PC-9 (cell line): ENCODE measurements at regions of chr3 and their contacts with region 1.

Region 1: DNA sequence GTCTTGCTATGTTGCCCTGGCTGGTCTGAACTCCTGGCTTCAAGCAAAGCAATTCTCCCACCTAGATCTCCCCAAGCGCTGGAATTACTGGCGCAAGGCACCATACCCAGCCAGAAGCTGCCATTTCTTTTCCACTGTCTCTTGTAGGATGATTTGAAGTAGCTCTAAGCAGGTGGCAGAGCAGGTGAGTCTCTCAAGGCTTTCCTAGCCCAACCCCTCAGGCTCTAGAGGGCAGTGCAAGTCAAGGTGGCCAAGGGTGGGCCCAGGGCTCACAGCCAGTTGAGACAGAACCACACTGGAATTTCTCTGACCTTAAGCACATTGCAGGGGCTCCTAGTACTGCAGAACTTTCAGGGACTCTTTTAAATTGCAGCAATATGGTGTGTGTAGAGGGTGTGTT is 15.6 kb upstream of the DAG1 start:
- DNase-seq: peak; percentile 75
- H3K4me3 ChIP-seq: no peak overlapping the region
- H3K27ac ChIP-seq: no peak overlapping the region
- H3K4me1 ChIP-seq: peaks cover 24% of the 10 kb centered on the region
- H3K27me3 ChIP-seq: no peaks in the 10 kb centered on the region
- CTCF ChIP-seq: peak; percentile 51; the same call in 1 of the 2 replicates

Region 2: GRCh38 chr3:48989796-48990635 is 464.4 kb before region 1 on chr3 and contains the start of gene P4HTM:
- CTCF ChIA-PET with region 1: interaction called, 7 read pairs
- POLR2A ChIA-PET with region 1: no interaction called
- intact Hi-C with region 1: loop called (anchors 2 kb)
- DNase-seq: peak; percentile 64 to 82
- H3K4me3 ChIP-seq: peak within 1 kb of the TSS; percentile 78
- H3K27ac ChIP-seq: peak within 1 kb of the TSS; percentile 48; the same call in 1 of the 2 replicates
- H3K4me1 ChIP-seq: peaks cover 18% of the 10 kb centered on the region
- H3K27me3 ChIP-seq: no peaks in the 10 kb centered on the region
- CTCF ChIP-seq: no peak; the same call in 1 of the 2 replicates
- total RNA-seq, gene P4HTM: 49.1 and 57.1 TPM in 2 replicates

Region 3: GRCh38 chr3:49339945-49340800 is 114.3 kb before region 1 on chr3 and contains the start of gene USP4:
- CTCF ChIA-PET with region 1: interaction called, 8 read pairs
- POLR2A ChIA-PET with region 1: interaction called, 10 read pairs
- intact Hi-C with region 1: loop called (anchors 1 kb)
- DNase-seq: peak; percentile 81 to 90
- H3K4me3 ChIP-seq: peak within 1 kb of the TSS; percentile 88
- H3K27ac ChIP-seq: peak within 1 kb of the TSS; percentile 77
- H3K4me1 ChIP-seq: peaks cover 8% of the 10 kb centered on the region; the same call in 1 of the 2 replicates
- H3K27me3 ChIP-seq: no peaks in the 10 kb centered on the region
- CTCF ChIP-seq: peak; percentile 42; the same call in 1 of the 2 replicates
- total RNA-seq, gene USP4: 39.8 and 42.9 TPM in 2 replicates

Region 4: GRCh38 chr3:49484471-49484870 is 30.0 kb after region 1 on chr3:
- CTCF ChIA-PET with region 1: interaction called, 3 read pairs
- POLR2A ChIA-PET with region 1: interaction called, 27 read pairs
- intact Hi-C with region 1: no loop called
- DNase-seq: no peak
- H3K4me3 ChIP-seq: no peak overlapping the region
- H3K27ac ChIP-seq: no peak overlapping the region
- H3K4me1 ChIP-seq: peaks cover 4% of the 10 kb centered on the region
- H3K27me3 ChIP-seq: no peaks in the 10 kb centered on the region
- CTCF ChIP-seq: no peak

Region 5: GRCh38 chr3:49566312-49566711 is 111.9 kb after region 1 on chr3:
- CTCF ChIA-PET with region 1: interaction called, 11 read pairs
- POLR2A ChIA-PET with region 1: no interaction called
- intact Hi-C with region 1: no loop called
- DNase-seq: no peak
- H3K4me3 ChIP-seq: no peak overlapping the region
- H3K27ac ChIP-seq: no peak overlapping the region
- H3K4me1 ChIP-seq: no peaks in the 10 kb centered on the region
- H3K27me3 ChIP-seq: peaks cover 8% of the 10 kb centered on the region; the same call in 1 of the 2 replicates
- CTCF ChIP-seq: peak; percentile 59

Region 6: DNA sequence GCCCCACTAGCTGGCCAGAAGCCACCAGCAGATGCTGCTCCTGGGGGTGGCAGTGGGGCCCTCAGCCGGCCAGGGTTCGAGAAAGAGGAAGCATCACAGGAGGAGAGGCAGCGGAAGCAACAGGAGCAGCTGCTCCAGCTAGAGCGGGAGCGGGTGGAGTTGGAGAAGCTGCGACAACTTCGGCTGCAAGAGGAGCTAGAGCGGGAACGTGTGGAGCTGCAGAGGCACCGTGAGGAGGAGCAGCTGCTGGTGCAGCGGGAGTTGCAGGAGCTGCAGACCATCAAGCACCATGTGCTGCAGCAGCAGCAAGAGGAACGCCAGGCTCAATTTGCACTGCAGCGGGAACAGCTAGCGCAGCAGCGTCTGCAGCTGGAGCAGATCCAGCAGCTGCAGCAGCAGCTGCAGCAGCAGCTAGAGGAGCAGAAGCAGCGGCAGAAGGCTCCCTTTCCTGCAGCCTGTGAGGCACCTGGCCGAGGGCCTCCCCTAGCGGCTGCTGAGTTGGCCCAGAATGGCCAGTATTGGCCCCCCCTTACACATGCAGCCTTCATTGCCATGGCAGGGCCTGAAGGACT is 202.2 kb after region 1 on chr3:
- CTCF ChIA-PET with region 1: no interaction called
- POLR2A ChIA-PET with region 1: no interaction called
- intact Hi-C with region 1: no loop called
- DNase-seq: no peak
- H3K4me3 ChIP-seq: no peak overlapping the region
- H3K27ac ChIP-seq: no peak overlapping the region
- H3K4me1 ChIP-seq: no peaks in the 10 kb centered on the region
- H3K27me3 ChIP-seq: no peaks in the 10 kb centered on the region
- CTCF ChIP-seq: no peak; the same call in 1 of the 2 replicates